ENCODE measurements at regions of chr10 and their contacts with region 1.

Region 1: GRCh38 chr10:112949875-112950507 is at the start of gene TCF7L2:
- DNase-seq: peak; percentile 94 to 98 (median 96)
- ATAC-seq: peak; percentile 88
- H3K4me3 ChIP-seq: peak within 1 kb of the TSS; percentile 73 to 85
- H3K27ac ChIP-seq: peak within 1 kb of the TSS; percentile 90 to 96
- H3K4me1 ChIP-seq: peaks cover 14 to 43% of the 10 kb centered on the region in 2 donors
- H3K27me3 ChIP-seq: peaks cover 0 to 9% of the 10 kb centered on the region in 2 donors
- CTCF ChIP-seq: no peak
- polyA plus RNA-seq, gene TCF7L2: 48.5 to 54.9 (median 54.2) TPM

Region 2: GRCh38 chr10:113045147-113046055 is 95.4 kb after region 1 on chr10:
- intact Hi-C with region 1: loop called in 1 of 2 experiments (anchors 10 kb)
- DNase-seq: no peak
- ATAC-seq: peak; percentile 36
- H3K4me3 ChIP-seq: no peak overlapping the region
- H3K27ac ChIP-seq: no peak overlapping the region
- H3K4me1 ChIP-seq: peaks cover 20 to 50% of the 10 kb centered on the region in 2 donors
- H3K27me3 ChIP-seq: no peaks in the 10 kb centered on the region
- CTCF ChIP-seq: no peak

Region 3: DNA sequence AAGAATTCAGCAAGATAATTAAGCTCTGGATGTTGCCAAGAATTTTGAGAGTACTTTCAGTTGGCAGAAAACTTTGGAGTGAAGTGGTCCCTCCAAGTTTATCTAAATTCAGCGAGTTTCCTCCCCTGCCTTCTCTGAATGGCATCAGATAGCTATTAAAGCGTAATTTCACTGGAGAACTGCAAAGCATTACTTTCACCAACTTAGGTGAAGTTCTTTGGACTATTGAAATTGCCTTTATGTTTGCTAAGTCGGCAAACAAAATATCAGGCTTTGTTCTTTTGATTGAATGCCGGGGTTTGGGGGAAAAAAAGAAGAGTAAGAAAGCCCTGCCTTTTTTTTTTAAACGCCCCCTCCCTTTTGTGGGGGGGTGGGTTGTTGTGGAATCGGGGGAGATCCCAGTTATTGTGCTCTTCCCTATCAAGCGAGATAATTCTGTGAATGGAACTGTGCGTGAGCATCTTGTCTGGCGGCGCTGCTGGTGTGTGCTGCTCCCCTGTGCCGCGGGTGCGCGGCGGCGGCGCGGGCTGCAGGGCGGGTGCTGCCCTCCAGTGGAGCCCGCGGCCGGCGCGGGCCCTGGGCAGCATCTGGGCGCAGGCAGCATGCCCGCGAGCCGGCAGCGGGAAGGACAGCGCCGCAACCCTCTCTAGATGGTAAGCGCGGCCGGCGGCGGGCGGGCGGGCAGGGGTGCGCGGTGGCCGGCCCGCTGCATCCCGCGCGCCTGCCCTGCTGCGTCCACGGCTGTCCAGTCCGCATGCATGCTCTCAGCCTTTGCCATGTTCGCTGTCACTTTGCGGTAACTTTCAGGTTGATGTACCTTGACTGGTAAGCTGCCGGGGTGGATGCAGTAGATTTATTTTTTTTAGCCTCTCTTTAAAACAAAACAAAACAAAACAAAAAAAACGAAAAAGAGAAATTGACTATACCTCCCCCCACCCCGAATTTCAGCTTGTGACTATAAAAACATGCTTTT is 176.5 kb after region 1 on chr10:
- intact Hi-C with region 1: loop called in 1 of 2 experiments (anchors 10 kb)
- DNase-seq: peak; percentile 59 to 94 (median 73)
- ATAC-seq: peak; percentile 100
- H3K4me3 ChIP-seq: peak overlapping the region; percentile 12 to 13
- H3K27ac ChIP-seq: no peak overlapping the region
- H3K4me1 ChIP-seq: peaks cover 0 to 23% of the 10 kb centered on the region in 2 donors
- H3K27me3 ChIP-seq: peaks cover 0 to 16% of the 10 kb centered on the region in 2 donors
- CTCF ChIP-seq: peak; percentile 63 to 75

Region 4: GRCh38 chr10:113475381-113475807 is 525.4 kb after region 1 on chr10:
- intact Hi-C with region 1: no loop called
- DNase-seq: no peak
- ATAC-seq: peak; percentile 58
- H3K4me3 ChIP-seq: no peak overlapping the region
- H3K27ac ChIP-seq: peak overlapping the region in 1 of 2 donors; percentile 4
- H3K4me1 ChIP-seq: peaks cover 3 to 11% of the 10 kb centered on the region in 2 donors
- H3K27me3 ChIP-seq: no peaks in the 10 kb centered on the region
- CTCF ChIP-seq: no peak

Measured in left lung (tissue), 14 donors.